Calu3 (cell line): ENCODE measurements at regions of chr2 and their contacts with region 1.

Region 1: GRCh38 chr2:174603280-174603679 is 5.7 kb upstream of the WIPF1 start:
- DNase-seq: peak; percentile 44
- H3K4me3 Mint-ChIP-seq: no peak overlapping the region
- H3K27ac Mint-ChIP-seq: no peak overlapping the region
- H3K4me1 Mint-ChIP-seq: no peaks in the 10 kb centered on the region
- H3K27me3 Mint-ChIP-seq: peaks cover 14% of the 10 kb centered on the region
- CTCF ChIP-seq: peak; percentile 35

Region 2: DNA sequence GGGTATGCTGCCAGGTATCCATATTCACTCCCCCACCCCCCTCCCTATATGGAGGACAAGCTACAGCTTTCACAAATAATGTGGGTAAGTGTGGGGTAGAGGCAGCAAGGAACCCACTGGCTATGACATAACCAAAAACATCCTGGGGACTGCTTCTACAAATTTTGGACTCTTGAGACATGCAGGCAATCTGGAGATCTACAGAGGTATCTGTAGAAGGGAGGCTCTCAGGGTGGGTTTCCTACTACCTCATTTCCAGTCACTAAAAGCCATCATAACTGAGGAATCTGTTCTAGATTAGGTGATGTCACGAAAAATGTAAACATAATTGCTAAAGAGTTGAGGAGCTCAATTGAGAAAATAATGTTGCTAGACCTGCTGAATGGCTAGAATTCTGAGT is 41.1 kb after region 1 on chr2:
- CTCF ChIA-PET with region 1: interaction called, 12 read pairs
- intact Hi-C with region 1: no loop called
- DNase-seq: no peak
- H3K4me3 Mint-ChIP-seq: no peak overlapping the region
- H3K27ac Mint-ChIP-seq: no peak overlapping the region
- H3K4me1 Mint-ChIP-seq: no peaks in the 10 kb centered on the region
- H3K27me3 Mint-ChIP-seq: peaks cover 60% of the 10 kb centered on the region
- CTCF ChIP-seq: no peak